Activated CD8-positive, alpha-beta memory T cell treated with anti-CD3 and anti-CD28 coated beads, Interleukin-2, amount 10 ng/mL, durations not matched to agents 7 days and 5 days (primary cell): ENCODE measurements at regions of chr12 and their contacts with region 1.

Region 1: GRCh38 chr12:92928962-92929915 is at the start of gene EEA1:
- DNase-seq: peak; percentile 97
- ATAC-seq: peak; percentile 91
- H3K4me3 Mint-ChIP-seq: peak within 1 kb of the TSS; percentile 77
- H3K27ac Mint-ChIP-seq: peak within 1 kb of the TSS; percentile 95
- H3K4me1 Mint-ChIP-seq: peaks cover 23% of the 10 kb centered on the region
- H3K27me3 Mint-ChIP-seq: peaks cover 2% of the 10 kb centered on the region
- total RNA-seq, gene EEA1: 14.5 to 14.7 TPM

Region 2: GRCh38 chr12:92908108-92908507 is 21.1 kb before region 1 on chr12:
- CTCF ChIA-PET with region 1: interaction called, 20 read pairs
- DNase-seq: peak; percentile 53
- ATAC-seq: peak; percentile 83
- H3K4me3 Mint-ChIP-seq: no peak overlapping the region
- H3K27ac Mint-ChIP-seq: no peak overlapping the region
- H3K4me1 Mint-ChIP-seq: peaks cover 32% of the 10 kb centered on the region
- H3K27me3 Mint-ChIP-seq: no peaks in the 10 kb centered on the region

Region 3: GRCh38 chr12:93002293-93003054 is 73.2 kb after region 1 on chr12:
- CTCF ChIA-PET with region 1: no interaction called
- DNase-seq: no peak
- ATAC-seq: no peak
- H3K4me3 Mint-ChIP-seq: no peak overlapping the region
- H3K27ac Mint-ChIP-seq: no peak overlapping the region
- H3K4me1 Mint-ChIP-seq: peaks cover 1% of the 10 kb centered on the region
- H3K27me3 Mint-ChIP-seq: peaks cover 3% of the 10 kb centered on the region